ENCODE measurements at regions of chr13 and their contacts with region 1.

Region 1: GRCh38 chr13:43316946-43317353 is 293.6 kb downstream of the DNAJC15 start:
- DNase-seq: no peak
- H3K4me3 ChIP-seq: peak overlapping the region; percentile 29
- CTCF ChIP-seq: no peak

Region 2: GRCh38 chr13:43074824-43075510 is 242.0 kb before region 1 on chr13:
- CTCF ChIA-PET with region 1: no interaction called
- POLR2A ChIA-PET with region 1: no interaction called
- DNase-seq: no peak
- H3K4me3 ChIP-seq: no peak overlapping the region
- CTCF ChIP-seq: no peak

Region 3: DNA sequence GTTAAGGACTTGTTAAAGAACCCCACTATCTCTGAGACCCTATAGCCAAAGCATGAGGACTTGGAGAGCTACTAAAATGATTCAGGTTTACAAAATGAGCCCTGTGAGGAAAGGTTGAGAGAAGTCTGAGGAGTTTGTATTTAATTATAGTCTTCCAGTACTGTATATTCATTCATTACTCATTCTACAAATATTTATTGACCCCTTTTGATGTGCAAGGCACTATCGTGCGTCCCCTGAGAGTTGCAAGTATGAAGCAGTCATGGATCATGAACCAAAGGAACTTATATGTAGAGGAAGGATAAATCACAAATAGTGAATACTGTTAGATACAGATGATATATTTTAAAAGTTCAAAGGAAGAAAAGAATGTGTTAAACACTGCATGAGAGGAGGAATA is 209.2 kb before region 1 on chr13:
- CTCF ChIA-PET with region 1: no interaction called
- POLR2A ChIA-PET with region 1: no interaction called
- DNase-seq: peak; percentile 31
- H3K4me3 ChIP-seq: no peak overlapping the region
- CTCF ChIP-seq: no peak

Region 4: DNA sequence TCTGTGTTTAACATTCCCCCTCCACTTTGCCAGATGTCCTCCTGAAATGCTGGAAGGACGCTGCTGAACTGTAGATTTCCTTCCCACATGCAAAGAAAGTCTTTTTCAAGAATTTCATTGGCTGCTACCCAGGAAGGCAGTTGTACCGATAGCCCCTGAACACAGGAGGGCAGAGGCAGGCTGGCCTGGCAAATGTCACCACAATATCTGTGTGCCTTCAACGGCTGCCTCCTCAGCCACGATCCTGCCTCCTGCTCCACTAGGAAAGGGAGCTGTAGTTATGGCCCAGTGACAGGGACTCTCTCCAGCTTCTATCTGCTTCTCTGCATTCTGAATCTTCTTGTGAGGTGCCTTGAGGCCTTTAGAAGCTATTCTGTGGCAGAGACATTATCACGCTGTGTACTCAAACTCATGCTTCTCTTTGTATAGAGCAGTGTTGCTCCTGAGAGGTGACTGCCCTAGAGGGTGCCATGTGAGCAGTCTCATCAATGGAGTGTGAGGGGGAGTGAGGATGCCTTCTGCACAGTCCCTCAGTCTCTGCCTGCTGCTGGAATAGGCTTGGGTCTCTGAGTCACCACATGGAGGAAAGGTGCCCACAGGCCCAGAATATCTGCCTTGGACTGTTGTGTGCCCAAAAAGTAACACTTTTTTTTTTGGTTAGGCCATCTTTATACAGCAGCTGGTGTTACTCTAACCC is 13.8 kb before region 1 on chr13:
- CTCF ChIA-PET with region 1: interaction called, 13 read pairs
- POLR2A ChIA-PET with region 1: no interaction called
- DNase-seq: no peak
- H3K4me3 ChIP-seq: no peak overlapping the region
- CTCF ChIP-seq: peak; percentile 72